ENCODE measurements at regions of chr18 and their contacts with region 1.

Region 1: DNA sequence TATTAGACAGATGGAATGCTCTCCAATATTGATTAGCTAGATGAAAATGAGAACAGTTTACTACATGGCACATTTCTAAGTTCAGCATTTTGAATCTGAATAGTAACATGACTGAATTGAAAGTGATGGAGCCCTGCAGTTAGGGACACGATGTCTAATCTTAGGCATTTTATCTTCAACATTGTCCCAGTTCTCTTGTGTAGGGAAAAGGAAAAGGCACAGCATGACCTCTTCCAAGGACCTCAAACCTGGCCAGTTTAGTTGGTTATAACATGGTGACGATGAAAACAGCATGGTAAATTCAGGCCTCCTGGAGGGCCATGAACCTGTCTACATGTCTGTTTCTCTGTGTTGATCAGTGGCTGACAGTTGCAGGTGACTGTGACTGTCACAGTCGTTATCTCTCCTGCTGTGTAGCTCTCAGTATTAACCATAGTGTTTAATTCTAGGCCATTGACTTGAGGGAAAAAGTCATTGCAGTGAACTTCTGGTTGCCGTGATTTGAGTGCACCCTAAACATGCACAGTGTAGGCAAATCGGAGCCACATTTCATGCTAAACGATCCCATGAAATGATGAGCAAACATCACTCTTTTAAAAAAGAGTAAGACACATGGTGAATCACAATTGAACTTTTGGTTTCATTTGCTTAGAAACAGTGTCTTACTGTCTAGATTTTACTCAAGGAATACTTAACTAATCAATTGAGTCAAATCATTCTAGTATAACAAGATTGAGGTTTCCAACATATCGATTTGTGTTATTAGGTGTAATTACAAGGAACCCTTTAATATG is 129.7 kb downstream of the PHLPP1 start:
- DNase-seq: no peak
- ATAC-seq: no peak
- H3K4me3 ChIP-seq: no peak overlapping the region
- H3K4me3 Mint-ChIP-seq: peak overlapping the region in 1 of 10 donors; percentile 83
- H3K27ac ChIP-seq: no peak overlapping the region
- H3K27ac Mint-ChIP-seq: peak overlapping the region in 1 of 9 donors; percentile 90
- H3K4me1 ChIP-seq: no peaks in the 10 kb centered on the region
- H3K4me1 Mint-ChIP-seq: peaks cover 0 to 33% (median 0%) of the 10 kb centered on the region in 7 donors
- H3K27me3 ChIP-seq: no peaks in the 10 kb centered on the region
- H3K27me3 Mint-ChIP-seq: no peaks in the 10 kb centered on the region

Region 2: DNA sequence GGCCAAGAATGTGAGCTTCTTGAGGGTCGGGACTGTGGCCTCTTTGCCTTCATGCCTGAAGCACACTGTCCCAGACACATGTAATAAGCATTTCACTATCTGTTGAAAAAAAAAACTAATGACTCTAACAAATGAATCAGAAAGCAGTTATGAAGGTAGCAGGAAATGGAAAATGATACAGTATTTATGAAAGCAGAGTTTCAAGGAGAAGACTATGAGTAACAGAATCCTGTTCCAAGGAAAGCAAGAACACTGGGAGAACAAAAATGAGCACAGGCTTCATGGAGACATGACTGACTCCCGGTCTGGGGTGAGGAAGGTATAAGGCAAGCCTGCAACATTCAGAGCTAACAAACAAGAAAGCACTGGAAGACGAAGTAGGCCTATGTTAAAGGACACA is 1143.0 kb before region 1 on chr18:
- CTCF ChIA-PET with region 1: no interaction called
- POLR2A ChIA-PET with region 1: no interaction called
- intact Hi-C with region 1: no loop called
- DNase-seq: no peak
- ATAC-seq: no peak
- H3K4me3 ChIP-seq: no peak overlapping the region
- H3K4me3 Mint-ChIP-seq: no peak overlapping the region
- H3K27ac ChIP-seq: no peak overlapping the region
- H3K27ac Mint-ChIP-seq: no peak overlapping the region
- H3K4me1 ChIP-seq: no peaks in the 10 kb centered on the region
- H3K4me1 Mint-ChIP-seq: no peaks in the 10 kb centered on the region
- H3K27me3 ChIP-seq: no peaks in the 10 kb centered on the region
- H3K27me3 Mint-ChIP-seq: peaks cover 0 to 23% (median 11%) of the 10 kb centered on the region in 5 donors

Region 3: DNA sequence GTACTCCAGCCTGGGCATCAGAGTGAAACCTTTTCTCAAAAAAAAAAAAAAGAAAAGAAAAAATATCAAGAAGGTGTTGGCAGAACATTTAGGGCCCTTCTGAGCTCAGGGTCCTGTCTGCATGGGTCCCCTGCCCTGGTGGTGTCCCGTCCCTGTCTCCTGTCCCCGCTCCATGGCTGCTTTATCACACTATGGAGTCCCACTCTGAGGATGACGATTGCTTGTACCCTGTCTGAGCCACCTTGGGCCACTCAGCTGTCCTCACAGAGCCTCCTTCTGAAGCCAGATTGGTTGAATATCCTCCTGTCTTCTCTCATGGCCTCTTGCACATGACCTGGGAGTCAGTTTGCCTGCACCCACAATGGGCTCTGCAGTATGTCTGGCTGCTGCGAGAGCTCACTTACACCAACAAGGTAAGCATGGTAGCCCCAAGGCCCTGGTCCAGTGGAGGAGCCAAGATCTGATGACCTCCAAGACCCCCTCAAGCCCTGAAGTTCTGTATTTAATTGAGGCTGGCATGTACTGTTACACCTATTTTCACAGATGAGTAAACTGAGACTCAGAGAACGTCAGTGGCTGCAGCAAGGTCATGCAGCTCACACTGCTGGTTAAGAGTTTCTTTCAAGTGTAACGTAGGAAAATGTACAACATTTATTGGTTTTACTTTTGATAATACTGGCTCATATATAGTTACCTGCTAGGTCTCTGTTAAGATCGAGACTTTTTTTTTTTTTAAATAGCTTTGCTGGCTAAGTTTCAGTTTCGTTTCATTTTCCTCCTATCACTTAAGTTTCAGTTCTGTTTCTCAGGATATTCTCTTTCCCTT is 339.2 kb before region 1 on chr18:
- CTCF ChIA-PET with region 1: interaction called, 9 read pairs
- POLR2A ChIA-PET with region 1: no interaction called
- intact Hi-C with region 1: loop called in 1 of 2 experiments (anchors 10 kb)
- DNase-seq: peak in 5 of 9 donors; percentile 37 to 49 (median 47)
- ATAC-seq: peak; percentile 58
- H3K4me3 ChIP-seq: peak overlapping the region; percentile 77
- H3K4me3 Mint-ChIP-seq: peak overlapping the region; percentile 82 to 94 (median 88)
- H3K27ac ChIP-seq: peak overlapping the region; percentile 67
- H3K27ac Mint-ChIP-seq: peak overlapping the region; percentile 90 to 100 (median 96)
- H3K4me1 ChIP-seq: peaks cover 5 to 17% of the 10 kb centered on the region in 2 donors
- H3K4me1 Mint-ChIP-seq: peaks cover 4 to 30% (median 21%) of the 10 kb centered on the region in 7 donors
- H3K27me3 ChIP-seq: no peaks in the 10 kb centered on the region
- H3K27me3 Mint-ChIP-seq: no peaks in the 10 kb centered on the region

Region 4: GRCh38 chr18:62867534-62867933 is 22.5 kb after region 1 on chr18:
- CTCF ChIA-PET with region 1: no interaction called
- POLR2A ChIA-PET with region 1: no interaction called
- intact Hi-C with region 1: loop called in 1 of 2 experiments (anchors 1 kb)
- DNase-seq: no peak
- ATAC-seq: no peak
- H3K4me3 ChIP-seq: no peak overlapping the region
- H3K4me3 Mint-ChIP-seq: peak overlapping the region in 1 of 10 donors; percentile 5
- H3K27ac ChIP-seq: no peak overlapping the region
- H3K27ac Mint-ChIP-seq: peak overlapping the region in 1 of 9 donors; percentile 14
- H3K4me1 ChIP-seq: peaks cover 3 to 9% of the 10 kb centered on the region in 2 donors
- H3K4me1 Mint-ChIP-seq: peaks cover 12 to 33% (median 21%) of the 10 kb centered on the region in 7 donors
- H3K27me3 ChIP-seq: no peaks in the 10 kb centered on the region
- H3K27me3 Mint-ChIP-seq: no peaks in the 10 kb centered on the region

Region 5: GRCh38 chr18:62957885-62958472 is 112.9 kb after region 1 on chr18:
- CTCF ChIA-PET with region 1: no interaction called
- POLR2A ChIA-PET with region 1: no interaction called
- intact Hi-C with region 1: loop called in 1 of 2 experiments (anchors 5 kb)
- DNase-seq: peak in 6 of 9 donors; percentile 18 to 46 (median 28)
- ATAC-seq: peak; percentile 64
- H3K4me3 ChIP-seq: no peak overlapping the region
- H3K4me3 Mint-ChIP-seq: no peak overlapping the region
- H3K27ac ChIP-seq: no peak overlapping the region
- H3K27ac Mint-ChIP-seq: no peak overlapping the region
- H3K4me1 ChIP-seq: peaks cover 0 to 17% of the 10 kb centered on the region in 2 donors
- H3K4me1 Mint-ChIP-seq: peaks cover 11 to 22% (median 17%) of the 10 kb centered on the region in 7 donors
- H3K27me3 ChIP-seq: no peaks in the 10 kb centered on the region
- H3K27me3 Mint-ChIP-seq: no peaks in the 10 kb centered on the region

Region 6: GRCh38 chr18:63476666-63477065 is 631.6 kb after region 1 on chr18 and contains the start of gene SERPINB5:
- CTCF ChIA-PET with region 1: no interaction called
- POLR2A ChIA-PET with region 1: no interaction called
- intact Hi-C with region 1: no loop called
- DNase-seq: no peak
- ATAC-seq: no peak
- H3K4me3 ChIP-seq: no peak within 1 kb of the TSS
- H3K4me3 Mint-ChIP-seq: no peak within 1 kb of the TSS
- H3K27ac ChIP-seq: no peak within 1 kb of the TSS
- H3K27ac Mint-ChIP-seq: no peak within 1 kb of the TSS
- H3K4me1 ChIP-seq: no peaks in the 10 kb centered on the region
- H3K4me1 Mint-ChIP-seq: no peaks in the 10 kb centered on the region
- H3K27me3 ChIP-seq: no peaks in the 10 kb centered on the region
- H3K27me3 Mint-ChIP-seq: peaks cover 0 to 35% (median 12%) of the 10 kb centered on the region in 5 donors
- total RNA-seq, gene SERPINB5: not detected

Measured in naive thymus-derived CD4-positive, alpha-beta T cell (primary cell).